Activated CD4-positive, alpha-beta memory T cell treated with anti-CD3 and anti-CD28 coated beads for 36 hours (primary cell): ENCODE measurements at regions of chr15 and their contacts with region 1.

Region 1: DNA sequence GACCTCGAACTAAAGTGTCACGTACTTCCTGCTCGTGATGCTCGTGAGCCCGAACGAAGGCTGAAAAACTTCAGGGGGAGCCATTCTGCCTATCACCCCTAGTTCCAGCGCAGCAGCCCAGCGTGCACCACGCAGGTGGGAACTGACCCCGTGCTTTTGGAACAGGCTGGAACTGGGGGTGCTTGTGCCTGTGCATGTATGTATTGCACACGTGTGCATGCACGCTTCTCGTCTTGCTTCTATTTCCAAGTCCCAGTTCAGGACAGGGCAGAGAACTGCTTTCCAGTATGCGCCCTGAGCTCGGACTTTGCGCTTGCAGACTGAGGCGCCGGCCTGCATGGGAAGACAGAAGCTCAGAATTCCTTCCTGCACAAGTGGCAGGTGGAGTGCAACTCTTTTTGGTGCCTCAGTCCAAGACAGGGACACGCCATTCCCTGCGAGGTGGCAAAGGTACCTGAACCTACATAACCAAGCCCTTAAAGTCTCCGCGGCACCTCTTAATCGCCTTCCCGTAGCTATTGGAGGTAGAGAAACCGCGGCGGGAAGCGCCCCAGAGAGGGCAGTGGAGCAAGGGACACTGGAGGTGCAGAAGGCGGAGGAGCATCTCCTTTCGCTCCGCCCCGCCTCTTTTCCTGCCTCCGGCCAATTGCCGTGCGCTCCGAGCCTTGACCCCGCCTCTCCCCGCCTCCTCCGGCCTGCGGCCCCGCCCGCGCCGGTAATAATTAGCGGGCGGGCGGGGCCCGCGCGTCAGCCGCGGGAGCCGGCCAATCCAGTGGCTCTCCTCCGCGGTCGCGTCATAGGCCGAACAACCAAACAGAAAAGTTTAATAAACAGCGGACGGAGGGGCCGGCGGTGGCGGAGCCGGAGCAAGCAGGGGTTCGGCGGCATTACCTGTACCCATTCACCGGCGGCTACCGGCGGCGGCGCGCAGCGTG is at the start of gene ZFAND6:
- DNase-seq: peak; percentile 97
- H3K4me3 Mint-ChIP-seq: peak within 1 kb of the TSS; percentile 81
- H3K27ac Mint-ChIP-seq: peak within 1 kb of the TSS; percentile 90
- H3K4me1 Mint-ChIP-seq: peaks cover 35% of the 10 kb centered on the region
- H3K27me3 Mint-ChIP-seq: no peaks in the 10 kb centered on the region
- total RNA-seq, gene ZFAND6: 32.2 to 33.4 TPM

Region 2: DNA sequence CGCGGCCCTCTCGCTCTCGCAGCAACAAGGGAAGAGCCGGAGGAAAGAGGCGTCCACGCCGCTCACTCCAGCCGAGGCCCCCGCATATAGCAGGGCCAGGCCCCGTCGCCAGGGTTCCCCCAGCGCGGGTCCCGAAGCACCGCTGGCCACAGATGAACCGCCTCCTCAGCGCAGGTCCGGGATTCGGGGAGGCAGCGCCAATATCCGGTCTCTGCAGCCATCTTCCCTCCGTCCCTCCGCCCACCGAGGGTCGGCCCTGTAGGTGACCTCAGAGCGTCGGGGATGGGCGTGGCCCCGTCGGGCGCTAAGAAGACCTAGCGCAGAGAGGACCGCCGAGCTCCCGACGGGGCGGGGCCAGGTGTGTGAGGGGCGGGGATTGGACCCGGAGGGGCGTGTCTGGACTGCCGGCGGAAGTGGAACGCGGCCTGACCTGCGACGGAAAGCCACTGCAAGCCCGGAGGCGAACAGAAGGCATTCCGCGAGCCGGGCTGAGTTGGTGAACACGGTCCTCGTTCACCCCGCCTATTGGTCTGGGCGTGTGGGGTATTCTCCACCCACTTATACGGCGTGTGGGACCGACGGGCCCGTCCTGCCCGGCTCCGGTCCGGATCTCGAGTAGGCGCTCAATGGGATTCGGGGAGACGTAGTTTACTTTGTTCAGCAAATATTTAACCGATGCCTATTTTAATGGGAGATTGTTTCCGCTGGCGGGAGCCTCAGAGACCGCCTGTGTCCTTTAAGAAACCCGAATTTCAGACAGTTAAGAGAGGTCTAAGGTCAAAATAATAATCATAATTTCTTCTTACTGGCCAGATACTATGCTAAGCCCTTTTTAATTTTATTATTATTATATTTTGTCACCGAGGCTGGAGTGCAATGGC is 135.4 kb before region 1 on chr15:
- CTCF ChIA-PET with region 1: no interaction called
- POLR2A ChIA-PET with region 1: interaction called, 7 read pairs
- intact Hi-C with region 1: loop called (anchors 1 kb)
- DNase-seq: peak; percentile 99
- H3K4me3 Mint-ChIP-seq: peak overlapping the region; percentile 93
- H3K27ac Mint-ChIP-seq: peak overlapping the region; percentile 95
- H3K4me1 Mint-ChIP-seq: peaks cover 20% of the 10 kb centered on the region
- H3K27me3 Mint-ChIP-seq: no peaks in the 10 kb centered on the region

Region 3: GRCh38 chr15:80031841-80032240 is 27.3 kb before region 1 on chr15:
- CTCF ChIA-PET with region 1: interaction called, 4 read pairs
- POLR2A ChIA-PET with region 1: interaction called, 14 read pairs
- intact Hi-C with region 1: loop called (anchors 1 kb)
- DNase-seq: peak; percentile 69
- H3K4me3 Mint-ChIP-seq: no peak overlapping the region
- H3K27ac Mint-ChIP-seq: peak overlapping the region; percentile 76
- H3K4me1 Mint-ChIP-seq: peaks cover 26% of the 10 kb centered on the region
- H3K27me3 Mint-ChIP-seq: no peaks in the 10 kb centered on the region

Region 4: DNA sequence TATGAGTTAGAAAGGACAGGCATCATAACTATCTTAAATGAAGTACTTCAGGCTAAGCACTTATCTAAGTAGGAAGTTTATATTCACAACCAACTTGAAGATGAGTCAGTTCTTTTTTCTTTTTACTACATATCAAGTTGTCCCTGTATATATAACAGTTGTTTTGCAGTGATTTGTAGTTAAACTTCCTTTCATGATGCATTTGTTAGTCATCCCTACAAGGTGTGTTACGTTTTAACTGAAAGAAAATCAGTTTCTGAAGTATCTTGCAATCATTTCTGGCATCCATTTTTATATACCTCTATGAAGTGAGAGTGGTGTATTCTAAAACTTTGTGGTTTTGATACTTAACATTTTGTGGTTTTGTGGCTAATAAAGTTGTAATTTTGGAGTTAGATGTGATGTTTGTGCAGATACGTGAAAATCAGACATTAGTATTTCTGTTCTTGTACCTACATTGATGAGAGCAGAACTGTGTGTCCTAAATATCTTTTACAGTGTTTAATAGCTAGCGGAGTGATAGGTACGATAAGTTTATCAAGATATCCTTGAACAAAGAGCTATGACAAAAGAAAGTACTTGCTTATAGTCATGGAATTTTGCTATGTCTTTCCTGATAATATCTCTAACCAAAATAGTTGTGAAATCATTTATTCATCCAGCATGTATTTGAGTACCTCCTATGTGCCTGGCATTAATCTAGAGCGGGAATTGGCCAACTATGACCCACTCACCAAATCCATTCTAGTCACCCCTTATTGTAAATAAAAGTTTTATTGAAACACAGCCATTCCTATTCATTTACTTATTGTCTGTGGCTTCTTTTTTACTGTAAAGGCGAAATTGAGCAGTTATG is 46.7 kb after region 1 on chr15:
- CTCF ChIA-PET with region 1: no interaction called
- POLR2A ChIA-PET with region 1: interaction called, 7 read pairs
- intact Hi-C with region 1: loop called (anchors 5 kb)
- DNase-seq: no peak
- H3K4me3 Mint-ChIP-seq: no peak overlapping the region
- H3K27ac Mint-ChIP-seq: no peak overlapping the region
- H3K4me1 Mint-ChIP-seq: peaks cover 41% of the 10 kb centered on the region
- H3K27me3 Mint-ChIP-seq: no peaks in the 10 kb centered on the region

Region 5: GRCh38 chr15:80202641-80203360 is 143.7 kb after region 1 on chr15:
- CTCF ChIA-PET with region 1: no interaction called
- POLR2A ChIA-PET with region 1: no interaction called
- intact Hi-C with region 1: no loop called
- DNase-seq: no peak
- H3K4me3 Mint-ChIP-seq: no peak overlapping the region
- H3K27ac Mint-ChIP-seq: no peak overlapping the region
- H3K4me1 Mint-ChIP-seq: no peaks in the 10 kb centered on the region
- H3K27me3 Mint-ChIP-seq: peaks cover 13% of the 10 kb centered on the region

Region 6: GRCh38 chr15:80251428-80252120 is 192.5 kb after region 1 on chr15:
- CTCF ChIA-PET with region 1: no interaction called
- POLR2A ChIA-PET with region 1: no interaction called
- intact Hi-C with region 1: no loop called
- DNase-seq: no peak
- H3K4me3 Mint-ChIP-seq: no peak overlapping the region
- H3K27ac Mint-ChIP-seq: no peak overlapping the region
- H3K4me1 Mint-ChIP-seq: peaks cover 7% of the 10 kb centered on the region
- H3K27me3 Mint-ChIP-seq: peaks cover 55% of the 10 kb centered on the region

Region 7: DNA sequence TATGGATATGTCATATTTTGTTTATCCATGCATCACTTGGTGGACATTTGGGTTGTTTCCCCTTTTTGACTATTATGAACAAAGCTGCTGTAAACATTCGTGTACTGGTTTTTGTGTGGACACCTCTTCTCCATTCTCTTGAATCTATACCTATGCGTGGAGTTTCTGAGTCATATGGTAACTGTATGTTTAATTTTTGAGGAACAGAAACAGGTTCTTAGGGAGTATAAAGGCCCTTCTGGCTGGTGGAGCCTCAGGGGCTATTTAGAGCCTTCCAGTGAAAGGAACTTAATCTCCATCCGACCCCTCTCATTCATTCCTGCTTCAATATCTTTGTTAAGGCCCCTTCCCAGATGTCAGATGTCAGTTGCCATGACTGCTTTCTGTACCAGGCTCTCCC is 207.0 kb after region 1 on chr15:
- CTCF ChIA-PET with region 1: no interaction called
- POLR2A ChIA-PET with region 1: no interaction called
- intact Hi-C with region 1: no loop called
- DNase-seq: no peak
- H3K4me3 Mint-ChIP-seq: no peak overlapping the region
- H3K27ac Mint-ChIP-seq: no peak overlapping the region
- H3K4me1 Mint-ChIP-seq: no peaks in the 10 kb centered on the region
- H3K27me3 Mint-ChIP-seq: peaks cover 13% of the 10 kb centered on the region